AG04450 (cell line): ENCODE measurements at regions of chr10 and their contacts with region 1.

Region 1: GRCh38 chr10:16863766-16864165 is 46.5 kb upstream of the RSU1 start:
- DNase-seq: no peak
- H3K4me3 ChIP-seq: no peak overlapping the region
- H3K27ac ChIP-seq: no peak overlapping the region
- H3K27me3 ChIP-seq: no peaks in the 10 kb centered on the region
- CTCF ChIP-seq: no peak

Region 2: GRCh38 chr10:16853201-16853600 is 10.6 kb before region 1 on chr10:
- CTCF ChIA-PET with region 1: interaction called, 10 read pairs
- POLR2A ChIA-PET with region 1: no interaction called
- DNase-seq: no peak
- H3K4me3 ChIP-seq: no peak overlapping the region
- H3K27ac ChIP-seq: no peak overlapping the region
- H3K27me3 ChIP-seq: no peaks in the 10 kb centered on the region
- CTCF ChIP-seq: peak; percentile 68

Region 3: DNA sequence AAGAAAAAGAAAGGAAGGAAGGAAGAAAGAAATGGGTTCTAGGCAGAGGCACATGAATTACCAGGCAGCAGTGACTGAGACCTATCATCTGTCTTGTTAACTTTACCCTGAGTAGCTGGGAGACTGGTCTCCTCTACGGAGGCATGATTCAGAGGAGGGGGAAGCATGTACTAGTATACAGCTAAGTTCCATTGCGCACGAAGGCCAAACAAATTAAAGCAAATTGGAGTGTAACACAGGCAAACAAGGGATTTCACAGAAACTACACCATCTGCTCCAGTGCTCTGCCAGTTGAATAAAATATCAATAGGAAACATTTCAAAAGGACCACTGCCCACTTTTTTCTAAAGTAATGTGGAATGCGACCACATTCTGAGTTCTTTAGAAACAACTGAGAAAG is 19.3 kb after region 1 on chr10:
- CTCF ChIA-PET with region 1: no interaction called
- POLR2A ChIA-PET with region 1: no interaction called
- DNase-seq: no peak
- H3K4me3 ChIP-seq: no peak overlapping the region
- H3K27ac ChIP-seq: no peak overlapping the region
- H3K27me3 ChIP-seq: no peaks in the 10 kb centered on the region
- CTCF ChIP-seq: no peak

Region 4: GRCh38 chr10:17144757-17145156 is 281.0 kb after region 1 on chr10:
- CTCF ChIA-PET with region 1: no interaction called
- POLR2A ChIA-PET with region 1: no interaction called
- DNase-seq: no peak
- H3K4me3 ChIP-seq: no peak overlapping the region
- H3K27ac ChIP-seq: no peak overlapping the region
- H3K27me3 ChIP-seq: no peaks in the 10 kb centered on the region
- CTCF ChIP-seq: no peak